ENCODE measurements at regions of chr17 and their contacts with region 1.

Region 1: GRCh38 chr17:81018044-81018802 is 16.7 kb upstream of the BAIAP2 start:
- DNase-seq: peak in 1 of 5 donors; percentile 58
- H3K4me3 ChIP-seq: peak overlapping the region; percentile 81
- H3K4me3 Mint-ChIP-seq: peak overlapping the region; percentile 76 to 90 (median 87)
- H3K27ac ChIP-seq: peak overlapping the region; percentile 80
- H3K27ac Mint-ChIP-seq: peak overlapping the region; percentile 67 to 97 (median 94)
- H3K4me1 ChIP-seq: peaks cover 19% of the 10 kb centered on the region
- H3K4me1 Mint-ChIP-seq: peaks cover 18 to 41% (median 28%) of the 10 kb centered on the region in 3 donors
- H3K27me3 ChIP-seq: no peaks in the 10 kb centered on the region
- H3K27me3 Mint-ChIP-seq: peaks cover 0 to 5% of the 10 kb centered on the region in 2 donors

Region 2: DNA sequence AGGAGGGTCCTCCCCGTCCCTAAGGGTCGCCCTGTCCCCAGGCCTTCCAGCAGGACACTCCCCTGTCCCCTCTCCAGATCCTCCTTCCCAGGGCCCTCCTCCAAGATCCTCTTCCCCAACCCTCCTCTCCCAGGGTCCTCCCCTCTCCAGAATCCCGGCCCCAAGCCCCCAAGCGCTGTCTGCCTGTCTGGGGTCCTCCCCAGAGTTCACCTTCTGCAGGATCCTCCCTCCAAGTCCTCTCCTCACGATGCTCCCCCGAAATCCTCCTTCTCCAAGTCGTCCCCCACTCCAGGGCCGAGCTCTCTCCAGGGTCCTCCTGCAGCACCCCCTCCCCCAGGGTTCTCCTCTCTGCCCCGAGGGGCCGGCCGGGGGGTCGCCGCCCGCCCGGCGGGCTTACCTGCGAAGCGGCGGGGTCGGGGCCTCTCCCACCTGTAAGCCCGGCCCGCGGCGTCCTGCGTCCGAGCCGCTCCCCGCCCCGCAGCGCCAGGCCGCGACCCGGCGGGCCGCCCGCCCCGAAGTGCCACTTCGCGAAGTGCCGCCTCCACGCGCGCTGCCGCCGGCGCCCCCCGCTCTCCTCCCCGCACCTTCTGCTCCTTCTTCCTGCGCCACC is 16.1 kb after region 1 on chr17:
- CTCF ChIA-PET with region 1: interaction called, 15 read pairs
- POLR2A ChIA-PET with region 1: interaction called, 3 read pairs
- DNase-seq: no peak
- H3K4me3 ChIP-seq: peak overlapping the region; percentile 34
- H3K4me3 Mint-ChIP-seq: peak overlapping the region; percentile 60 to 98 (median 88)
- H3K27ac ChIP-seq: no peak overlapping the region
- H3K27ac Mint-ChIP-seq: peak overlapping the region in 5 of 8 donors; percentile 17 to 84 (median 57)
- H3K4me1 ChIP-seq: peaks cover 8% of the 10 kb centered on the region
- H3K4me1 Mint-ChIP-seq: peaks cover 9 to 28% (median 12%) of the 10 kb centered on the region in 3 donors
- H3K27me3 ChIP-seq: no peaks in the 10 kb centered on the region
- H3K27me3 Mint-ChIP-seq: peaks cover 5 to 13% of the 10 kb centered on the region in 2 donors

Region 3: GRCh38 chr17:81094509-81095382 is 76.5 kb after region 1 on chr17:
- CTCF ChIA-PET with region 1: interaction called, 30 read pairs
- POLR2A ChIA-PET with region 1: no interaction called
- DNase-seq: peak; percentile 75 to 96 (median 86)
- H3K4me3 ChIP-seq: peak overlapping the region; percentile 47
- H3K4me3 Mint-ChIP-seq: peak overlapping the region; percentile 45 to 88 (median 74)
- H3K27ac ChIP-seq: peak overlapping the region; percentile 76
- H3K27ac Mint-ChIP-seq: peak overlapping the region; percentile 79 to 98 (median 92)
- H3K4me1 ChIP-seq: peaks cover 51% of the 10 kb centered on the region
- H3K4me1 Mint-ChIP-seq: peaks cover 27 to 65% (median 42%) of the 10 kb centered on the region in 3 donors
- H3K27me3 ChIP-seq: no peaks in the 10 kb centered on the region
- H3K27me3 Mint-ChIP-seq: peaks cover 0 to 2% of the 10 kb centered on the region in 2 donors

Region 4: DNA sequence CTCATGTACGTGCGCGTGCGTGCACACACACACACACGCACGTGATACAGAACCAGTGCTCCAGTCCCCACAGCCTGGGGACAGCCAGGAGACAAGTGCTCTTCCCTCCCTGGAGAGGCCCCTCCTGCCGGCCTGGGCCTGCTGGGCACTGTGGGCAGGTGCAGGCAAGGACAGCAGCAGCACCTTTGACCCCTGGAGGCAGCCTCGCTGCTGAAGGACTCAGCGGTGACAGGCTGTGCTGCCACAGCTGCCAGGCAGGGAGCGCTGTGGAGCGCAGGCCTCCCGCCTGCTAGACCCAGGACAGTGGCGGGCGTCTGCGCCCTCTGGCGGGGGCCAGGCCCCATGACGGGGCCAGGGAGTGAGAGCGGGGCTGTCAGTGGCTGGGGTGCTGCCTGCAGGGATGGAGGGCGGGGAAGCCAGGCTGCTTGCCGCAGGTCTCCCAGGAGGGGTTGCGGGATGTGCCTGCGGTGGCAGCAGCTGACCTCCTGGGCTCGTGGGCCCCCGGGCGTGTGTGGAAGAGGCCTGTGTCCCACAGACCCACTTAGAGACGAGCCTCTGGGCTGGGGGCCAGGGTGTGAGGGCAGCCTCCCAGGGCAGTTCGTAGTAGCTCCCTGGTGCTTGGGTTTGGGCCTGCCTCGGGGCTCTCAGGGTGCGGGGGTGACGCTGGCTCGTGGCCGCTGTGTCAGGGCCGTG is 83.5 kb after region 1 on chr17:
- CTCF ChIA-PET with region 1: interaction called, 42 read pairs
- POLR2A ChIA-PET with region 1: no interaction called
- DNase-seq: peak; percentile 82 to 91 (median 85)
- H3K4me3 ChIP-seq: no peak overlapping the region
- H3K4me3 Mint-ChIP-seq: no peak overlapping the region
- H3K27ac ChIP-seq: no peak overlapping the region
- H3K27ac Mint-ChIP-seq: no peak overlapping the region
- H3K4me1 ChIP-seq: peaks cover 23% of the 10 kb centered on the region
- H3K4me1 Mint-ChIP-seq: peaks cover 3 to 19% (median 6%) of the 10 kb centered on the region in 3 donors
- H3K27me3 ChIP-seq: no peaks in the 10 kb centered on the region
- H3K27me3 Mint-ChIP-seq: peaks cover 0 to 1% of the 10 kb centered on the region in 2 donors

Measured in CD8-positive, alpha-beta memory T cell (primary cell).